ENCODE measurements at regions of chr2 and their contacts with region 1.

Region 1: DNA sequence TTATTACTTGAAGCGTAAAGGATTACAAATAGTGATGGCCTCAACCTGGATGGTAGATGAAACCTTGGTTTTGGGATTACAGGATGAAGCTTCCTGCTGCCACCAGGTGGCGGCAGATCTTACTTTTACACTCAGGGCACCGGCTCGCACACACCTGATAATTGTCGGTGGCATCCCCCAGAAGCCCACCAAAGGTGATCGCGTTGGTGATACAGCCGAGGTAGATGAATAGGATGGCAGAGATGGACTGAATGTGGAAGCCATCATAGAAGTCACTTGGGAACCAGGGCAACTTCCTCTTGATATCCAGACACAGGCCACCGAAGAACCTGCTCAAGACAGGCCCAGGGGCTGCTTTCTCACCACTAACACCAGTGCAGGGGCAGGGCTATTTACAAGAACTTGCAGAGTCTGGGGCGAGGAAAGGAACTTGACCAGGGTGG is 51.8 kb downstream of the MTHFD2 start:
- DNase-seq: peak; percentile 33 to 65 (median 54)
- ATAC-seq: peak; percentile 70
- H3K4me3 ChIP-seq: no peak overlapping the region
- H3K4me3 Mint-ChIP-seq: peak overlapping the region in 1 of 10 donors; percentile 49
- H3K27ac ChIP-seq: no peak overlapping the region
- H3K27ac Mint-ChIP-seq: peak overlapping the region in 2 of 9 donors; percentile 62 to 84
- H3K4me1 ChIP-seq: no peaks in the 10 kb centered on the region
- H3K4me1 Mint-ChIP-seq: peaks cover 0 to 6% (median 0%) of the 10 kb centered on the region in 7 donors
- H3K27me3 ChIP-seq: no peaks in the 10 kb centered on the region
- H3K27me3 Mint-ChIP-seq: no peaks in the 10 kb centered on the region

Region 2: DNA sequence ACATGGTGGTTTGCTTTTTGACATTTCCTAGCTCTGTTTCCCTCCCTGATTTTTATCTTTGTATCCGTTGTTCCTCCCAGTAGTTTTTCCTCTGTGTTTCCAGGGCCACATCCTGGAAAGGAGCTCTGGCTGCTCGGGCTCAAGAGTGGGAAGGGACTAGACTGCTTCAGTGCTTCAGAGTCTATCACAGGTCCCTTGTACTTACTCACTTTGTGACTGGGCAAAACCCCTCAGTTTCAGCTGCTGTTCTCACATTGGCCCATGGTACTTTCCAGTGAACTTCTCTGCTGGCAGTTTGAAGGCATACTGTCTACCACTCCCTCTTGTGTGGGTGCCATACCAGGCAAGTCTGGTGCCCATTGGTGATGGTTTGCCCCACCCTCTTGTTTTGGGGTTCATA is 429.0 kb before region 1 on chr2:
- CTCF ChIA-PET with region 1: interaction called, 11 read pairs
- POLR2A ChIA-PET with region 1: no interaction called
- intact Hi-C with region 1: loop called in 1 of 2 experiments (anchors 1 kb)
- DNase-seq: no peak
- ATAC-seq: no peak
- H3K4me3 ChIP-seq: no peak overlapping the region
- H3K4me3 Mint-ChIP-seq: no peak overlapping the region
- H3K27ac ChIP-seq: no peak overlapping the region
- H3K27ac Mint-ChIP-seq: peak overlapping the region in 1 of 9 donors; percentile 34
- H3K4me1 ChIP-seq: no peaks in the 10 kb centered on the region
- H3K4me1 Mint-ChIP-seq: peaks cover 0 to 8% (median 0%) of the 10 kb centered on the region in 7 donors
- H3K27me3 ChIP-seq: no peaks in the 10 kb centered on the region
- H3K27me3 Mint-ChIP-seq: no peaks in the 10 kb centered on the region

Region 3: GRCh38 chr2:74221604-74222299 is 28.5 kb before region 1 on chr2:
- CTCF ChIA-PET with region 1: no interaction called
- POLR2A ChIA-PET with region 1: no interaction called
- intact Hi-C with region 1: no loop called
- DNase-seq: no peak
- ATAC-seq: no peak
- H3K4me3 ChIP-seq: no peak overlapping the region
- H3K4me3 Mint-ChIP-seq: no peak overlapping the region
- H3K27ac ChIP-seq: no peak overlapping the region
- H3K27ac Mint-ChIP-seq: peak overlapping the region in 3 of 9 donors; percentile 14 to 42 (median 19)
- H3K4me1 ChIP-seq: no peaks in the 10 kb centered on the region
- H3K4me1 Mint-ChIP-seq: peaks cover 0 to 11% (median 0%) of the 10 kb centered on the region in 7 donors
- H3K27me3 ChIP-seq: no peaks in the 10 kb centered on the region
- H3K27me3 Mint-ChIP-seq: no peaks in the 10 kb centered on the region

Region 4: DNA sequence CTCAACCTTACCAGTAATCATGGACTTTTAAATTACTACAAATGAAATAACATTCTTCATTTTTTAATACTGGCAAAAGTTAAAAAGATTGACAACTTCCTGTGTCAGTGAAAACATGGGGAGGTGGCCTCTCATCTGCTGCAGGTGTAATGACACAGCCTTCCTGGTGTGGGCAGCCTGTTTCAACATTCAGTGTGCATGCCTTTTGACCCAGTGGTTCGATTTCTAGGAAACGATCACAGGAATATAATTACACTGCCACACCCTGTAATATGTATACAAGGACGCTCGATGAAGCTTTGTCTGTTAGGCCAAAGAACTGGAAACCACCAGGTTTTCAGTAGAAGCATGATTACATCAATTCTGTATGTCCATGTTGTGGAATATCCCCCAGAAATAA is 16.9 kb after region 1 on chr2:
- CTCF ChIA-PET with region 1: interaction called, 3 read pairs
- POLR2A ChIA-PET with region 1: no interaction called
- intact Hi-C with region 1: loop called in 1 of 2 experiments (anchors 2 kb)
- DNase-seq: peak in 8 of 9 donors; percentile 41 to 77 (median 66)
- ATAC-seq: peak; percentile 95
- H3K4me3 ChIP-seq: peak overlapping the region; percentile 1
- H3K4me3 Mint-ChIP-seq: peak overlapping the region; percentile 39 to 77 (median 72)
- H3K27ac ChIP-seq: peak overlapping the region; percentile 25
- H3K27ac Mint-ChIP-seq: peak overlapping the region; percentile 9 to 90 (median 80)
- H3K4me1 ChIP-seq: peaks cover 7 to 14% of the 10 kb centered on the region in 2 donors
- H3K4me1 Mint-ChIP-seq: peaks cover 10 to 37% (median 22%) of the 10 kb centered on the region in 7 donors
- H3K27me3 ChIP-seq: no peaks in the 10 kb centered on the region
- H3K27me3 Mint-ChIP-seq: no peaks in the 10 kb centered on the region

Region 5: DNA sequence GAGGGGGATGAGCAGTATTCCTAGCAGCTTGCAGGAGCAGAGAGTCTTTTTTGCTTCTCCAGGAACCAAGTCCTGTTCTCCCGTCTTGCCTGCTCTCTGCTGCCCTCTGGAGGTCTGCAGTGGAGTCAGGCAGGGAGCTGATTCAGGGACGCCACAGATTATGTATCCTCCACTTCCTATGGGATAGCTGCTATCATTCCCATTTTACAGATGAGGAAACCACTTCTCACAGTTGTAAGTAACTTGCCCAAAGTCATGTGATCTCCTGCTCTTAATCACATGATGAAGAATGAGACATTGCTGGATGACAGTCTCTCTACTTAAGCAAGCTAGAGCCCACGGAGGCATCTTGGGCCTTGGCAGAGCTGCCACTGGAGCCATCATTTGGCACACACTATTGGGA is 84.7 kb after region 1 on chr2:
- CTCF ChIA-PET with region 1: interaction called, 97 read pairs
- POLR2A ChIA-PET with region 1: interaction called, 4 read pairs
- intact Hi-C with region 1: loop called (anchors 1 kb)
- DNase-seq: peak; percentile 36 to 81 (median 67)
- ATAC-seq: peak; percentile 90
- H3K4me3 ChIP-seq: no peak overlapping the region
- H3K4me3 Mint-ChIP-seq: no peak overlapping the region
- H3K27ac ChIP-seq: no peak overlapping the region
- H3K27ac Mint-ChIP-seq: peak overlapping the region in 2 of 9 donors; percentile 62 to 77
- H3K4me1 ChIP-seq: peaks cover 0 to 5% of the 10 kb centered on the region in 2 donors
- H3K4me1 Mint-ChIP-seq: peaks cover 0 to 14% (median 4%) of the 10 kb centered on the region in 7 donors
- H3K27me3 ChIP-seq: no peaks in the 10 kb centered on the region
- H3K27me3 Mint-ChIP-seq: peaks cover 0 to 2% (median 0%) of the 10 kb centered on the region in 5 donors

Region 6: DNA sequence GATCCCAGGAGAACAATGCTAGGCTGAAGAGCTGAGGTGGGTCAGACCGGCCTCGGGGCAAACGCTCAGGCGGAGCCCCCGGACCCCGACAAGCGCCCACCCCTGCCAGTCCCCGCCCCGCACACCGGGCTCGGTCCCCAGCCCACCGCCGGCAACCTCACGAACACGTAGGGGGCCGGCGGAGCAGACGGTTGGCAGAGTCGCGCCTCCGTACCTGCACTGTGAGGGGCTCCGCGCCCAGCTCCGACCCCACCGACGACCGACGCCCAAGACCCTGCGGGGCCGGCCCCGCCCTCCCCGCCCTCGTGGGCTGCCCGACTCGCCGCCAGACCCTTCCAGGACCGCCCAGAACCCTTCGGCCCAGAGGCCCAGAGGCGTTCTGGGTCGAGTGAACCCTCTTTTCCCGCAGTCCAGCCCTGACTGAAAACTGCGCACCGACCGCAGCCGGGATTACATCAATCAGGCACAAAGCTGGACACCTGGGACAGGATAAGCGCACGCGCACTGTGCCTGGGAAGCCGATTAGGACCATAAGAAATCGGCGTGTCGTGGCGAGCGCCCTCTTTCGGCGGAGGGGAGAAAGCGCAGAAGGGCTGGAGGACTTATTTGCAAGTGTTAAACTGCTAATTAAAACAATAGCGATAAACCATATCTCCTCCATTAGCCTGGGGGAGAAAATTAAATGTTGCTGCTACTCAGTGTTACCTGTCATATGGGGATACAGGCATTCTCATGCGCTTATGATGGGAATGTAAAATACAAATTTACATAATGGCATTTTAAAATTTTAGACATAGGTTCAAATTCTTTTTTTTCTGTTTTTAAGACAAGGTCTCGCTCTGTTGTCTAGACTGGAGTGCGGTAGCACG is 141.6 kb after region 1 on chr2:
- CTCF ChIA-PET with region 1: interaction called, 9 read pairs
- POLR2A ChIA-PET with region 1: no interaction called
- intact Hi-C with region 1: loop called (anchors 1 kb)
- DNase-seq: peak; percentile 89 to 99 (median 93)
- ATAC-seq: peak; percentile 97
- H3K4me3 ChIP-seq: peak overlapping the region; percentile 78
- H3K4me3 Mint-ChIP-seq: peak overlapping the region in 4 of 10 donors; percentile 40 to 100 (median 92)
- H3K27ac ChIP-seq: peak overlapping the region; percentile 91
- H3K27ac Mint-ChIP-seq: peak overlapping the region in 8 of 9 donors; percentile 98 to 100 (median 99)
- H3K4me1 ChIP-seq: peaks cover 8 to 25% of the 10 kb centered on the region in 2 donors
- H3K4me1 Mint-ChIP-seq: peaks cover 0 to 15% (median 5%) of the 10 kb centered on the region in 7 donors
- H3K27me3 ChIP-seq: no peaks in the 10 kb centered on the region
- H3K27me3 Mint-ChIP-seq: peaks cover 0 to 14% (median 5%) of the 10 kb centered on the region in 5 donors

Region 7: GRCh38 chr2:74399785-74400184 is 149.6 kb after region 1 on chr2:
- CTCF ChIA-PET with region 1: interaction called, 3 read pairs
- POLR2A ChIA-PET with region 1: no interaction called
- intact Hi-C with region 1: loop called (anchors 1 kb)
- DNase-seq: peak in 5 of 9 donors; percentile 36 to 47 (median 42)
- ATAC-seq: peak; percentile 86
- H3K4me3 ChIP-seq: no peak overlapping the region
- H3K4me3 Mint-ChIP-seq: no peak overlapping the region
- H3K27ac ChIP-seq: no peak overlapping the region
- H3K27ac Mint-ChIP-seq: peak overlapping the region in 2 of 9 donors; percentile 8 to 28
- H3K4me1 ChIP-seq: no peaks in the 10 kb centered on the region
- H3K4me1 Mint-ChIP-seq: peaks cover 0 to 6% (median 5%) of the 10 kb centered on the region in 7 donors
- H3K27me3 ChIP-seq: no peaks in the 10 kb centered on the region
- H3K27me3 Mint-ChIP-seq: peaks cover 0 to 21% (median 4%) of the 10 kb centered on the region in 5 donors

Measured in naive thymus-derived CD4-positive, alpha-beta T cell (primary cell).